ENCODE measurements at regions of chr10 and their contacts with region 1.

Region 1: GRCh38 chr10:121927841-121928527 is at the start of gene ATE1:
- DNase-seq: peak; percentile 88
- ATAC-seq: peak; percentile 95
- H3K4me3 ChIP-seq: peak within 1 kb of the TSS; percentile 91
- H3K27ac ChIP-seq: peak within 1 kb of the TSS; percentile 98
- H3K4me1 ChIP-seq: no peaks in the 10 kb centered on the region
- H3K27me3 ChIP-seq: no peaks in the 10 kb centered on the region
- CTCF ChIP-seq: no peak; the same call in 1 of the 2 replicates
- POLR2A ChIP-seq: peak; percentile 85
- RAD21 ChIP-seq: no peak
- total RNA-seq, gene ATE1: 21.9 and 27.8 TPM in 2 replicates

Region 2: DNA sequence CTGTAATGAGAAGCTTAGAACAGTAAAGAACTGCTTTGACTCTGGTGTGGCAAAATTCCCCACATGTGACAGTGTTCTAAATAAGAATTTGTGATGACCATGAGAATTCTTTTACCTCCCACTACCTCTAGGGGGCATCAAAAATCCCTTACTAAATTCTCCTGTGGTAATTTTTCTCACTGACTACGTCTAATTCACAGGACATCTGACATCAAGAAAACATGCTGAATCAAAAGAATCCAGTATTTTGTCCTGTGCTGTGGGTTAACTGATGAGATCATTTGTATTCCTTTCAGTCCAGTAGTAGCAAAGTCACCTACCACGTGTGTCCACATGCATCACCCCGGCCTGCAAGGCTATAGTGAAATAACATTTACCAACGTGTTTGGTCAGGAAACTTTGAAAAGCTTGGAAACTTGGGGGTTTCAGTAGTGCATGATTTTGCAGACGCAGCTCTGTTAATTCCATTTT is 104.0 kb before region 1 on chr10:
- CTCF ChIA-PET with region 1: no interaction called
- POLR2A ChIA-PET with region 1: no interaction called
- dilution Hi-C with region 1: no loop called
- in situ Hi-C with region 1: no loop called
- intact Hi-C with region 1: no loop called
- DNase-seq: peak; percentile 46
- ATAC-seq: peak; percentile 72
- H3K4me3 ChIP-seq: no peak overlapping the region
- H3K27ac ChIP-seq: no peak overlapping the region
- H3K4me1 ChIP-seq: no peaks in the 10 kb centered on the region
- H3K27me3 ChIP-seq: no peaks in the 10 kb centered on the region
- CTCF ChIP-seq: peak; percentile 62
- POLR2A ChIP-seq: no peak
- RAD21 ChIP-seq: peak; percentile 34

Region 3: GRCh38 chr10:122112625-122113160 is 184.7 kb after region 1 on chr10:
- CTCF ChIA-PET with region 1: no interaction called
- POLR2A ChIA-PET with region 1: no interaction called
- dilution Hi-C with region 1: no loop called
- in situ Hi-C with region 1: no loop called
- intact Hi-C with region 1: loop called (anchors 1 kb)
- DNase-seq: peak; percentile 96
- ATAC-seq: peak; percentile 91
- H3K4me3 ChIP-seq: peak overlapping the region; percentile 70
- H3K27ac ChIP-seq: peak overlapping the region; percentile 65
- H3K4me1 ChIP-seq: peaks cover 10% of the 10 kb centered on the region
- H3K27me3 ChIP-seq: no peaks in the 10 kb centered on the region
- CTCF ChIP-seq: peak; percentile 76
- POLR2A ChIP-seq: peak; percentile 48; the same call in 1 of the 2 replicates
- RAD21 ChIP-seq: peak; percentile 71